ENCODE measurements at regions of chr2 and their contacts with region 1.

Region 1: DNA sequence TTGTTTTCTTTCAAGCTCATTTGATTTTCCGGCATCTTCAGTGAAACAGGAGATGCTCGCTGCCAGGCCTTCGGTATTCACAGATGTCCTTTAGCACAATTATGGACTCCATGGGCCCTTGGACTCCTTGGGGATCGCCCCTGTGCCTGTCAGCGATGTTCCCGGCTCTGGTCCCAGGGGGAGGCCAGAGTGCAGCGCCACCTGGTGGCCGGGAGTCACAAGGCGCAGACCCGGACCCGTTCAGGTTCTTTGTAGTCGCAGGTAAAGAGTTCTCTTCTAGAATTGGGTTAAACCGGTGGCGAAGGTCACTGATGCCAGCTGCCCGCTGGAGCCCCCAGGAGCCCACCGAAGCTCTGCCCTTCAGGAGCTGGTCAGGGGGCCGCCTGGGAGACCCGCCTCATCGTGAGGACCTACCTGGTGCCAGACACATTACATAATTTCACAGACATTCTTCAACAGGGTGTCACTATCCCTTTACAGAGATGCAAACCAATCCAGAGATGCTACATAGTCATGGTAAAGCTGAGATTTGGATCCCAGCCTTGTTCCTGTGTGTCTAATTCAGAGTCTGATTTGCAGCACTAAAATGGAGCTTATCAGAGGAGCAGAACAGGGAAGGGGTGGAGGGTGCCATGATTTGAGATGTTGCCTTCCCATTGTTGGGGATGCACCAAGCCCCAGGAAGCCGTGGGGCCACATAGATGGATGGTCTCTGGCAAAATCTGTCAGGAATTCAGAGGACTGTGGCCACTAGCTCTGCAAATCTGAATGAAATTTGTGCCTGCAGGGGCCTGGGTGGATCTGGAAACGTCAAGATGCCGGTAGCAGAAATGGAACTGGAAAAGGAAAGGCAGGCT is 6.0 kb upstream of the INPP5D start:
- DNase-seq: peak; percentile 74
- H3K4me3 ChIP-seq: no peak overlapping the region
- H3K27ac ChIP-seq: no peak overlapping the region
- H3K4me1 ChIP-seq: no peaks in the 10 kb centered on the region
- CTCF ChIP-seq: peak; percentile 99

Region 2: GRCh38 chr2:232611551-232612218 is 442.5 kb before region 1 on chr2:
- CTCF ChIA-PET with region 1: no interaction called
- POLR2A ChIA-PET with region 1: no interaction called
- intact Hi-C with region 1: loop called (anchors 5 kb)
- DNase-seq: peak; percentile 55
- H3K4me3 ChIP-seq: no peak overlapping the region
- H3K27ac ChIP-seq: no peak overlapping the region
- H3K4me1 ChIP-seq: no peaks in the 10 kb centered on the region
- CTCF ChIP-seq: peak; percentile 91

Region 3: GRCh38 chr2:232761301-232761907 is 292.8 kb before region 1 on chr2:
- CTCF ChIA-PET with region 1: no interaction called
- POLR2A ChIA-PET with region 1: no interaction called
- intact Hi-C with region 1: loop called (anchors 10 kb)
- DNase-seq: peak; percentile 70
- H3K4me3 ChIP-seq: no peak overlapping the region
- H3K27ac ChIP-seq: no peak overlapping the region
- H3K4me1 ChIP-seq: no peaks in the 10 kb centered on the region
- CTCF ChIP-seq: peak; percentile 95

Region 4: GRCh38 chr2:232809349-232810124 is 244.6 kb before region 1 on chr2:
- CTCF ChIA-PET with region 1: no interaction called
- POLR2A ChIA-PET with region 1: no interaction called
- intact Hi-C with region 1: no loop called
- DNase-seq: peak; percentile 31
- H3K4me3 ChIP-seq: no peak overlapping the region
- H3K27ac ChIP-seq: no peak overlapping the region
- H3K4me1 ChIP-seq: peaks cover 8% of the 10 kb centered on the region
- CTCF ChIP-seq: peak; percentile 74

Region 5: GRCh38 chr2:232854082-232854481 is 200.1 kb before region 1 on chr2:
- CTCF ChIA-PET with region 1: no interaction called
- POLR2A ChIA-PET with region 1: no interaction called
- intact Hi-C with region 1: loop called (anchors 5 kb)
- DNase-seq: no peak
- H3K4me3 ChIP-seq: no peak overlapping the region
- H3K27ac ChIP-seq: no peak overlapping the region
- H3K4me1 ChIP-seq: no peaks in the 10 kb centered on the region
- CTCF ChIP-seq: no peak

Measured in OCI-LY7 (cell line).